MCF 10A (cell line): ENCODE measurements at regions of chr1 and their contacts with region 1.

Region 1: DNA sequence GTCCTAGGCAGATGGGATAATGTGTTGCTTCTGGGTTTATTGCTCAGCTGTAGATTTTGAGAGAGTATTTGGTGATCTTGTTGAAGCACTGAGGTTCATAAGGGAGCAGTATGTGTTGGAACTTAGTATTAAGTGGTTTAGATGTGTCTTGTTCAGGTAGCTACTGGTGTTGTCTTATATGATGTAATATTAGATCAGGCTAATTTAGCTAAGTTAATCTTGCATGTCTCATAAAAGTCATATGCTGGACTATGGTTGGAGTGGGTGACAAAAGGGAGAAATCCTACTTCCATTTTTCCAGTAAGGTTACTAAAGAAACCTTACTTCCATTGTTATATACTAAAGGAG is 196.4 kb downstream of the CLEC20A start:
- DNase-seq: no peak
- H3K4me3 Mint-ChIP-seq: no peak overlapping the region
- H3K27ac Mint-ChIP-seq: peak overlapping the region; percentile 50
- H3K4me1 Mint-ChIP-seq: peaks cover 15% of the 10 kb centered on the region
- H3K27me3 Mint-ChIP-seq: no peaks in the 10 kb centered on the region
- CTCF ChIP-seq: no peak

Region 2: DNA sequence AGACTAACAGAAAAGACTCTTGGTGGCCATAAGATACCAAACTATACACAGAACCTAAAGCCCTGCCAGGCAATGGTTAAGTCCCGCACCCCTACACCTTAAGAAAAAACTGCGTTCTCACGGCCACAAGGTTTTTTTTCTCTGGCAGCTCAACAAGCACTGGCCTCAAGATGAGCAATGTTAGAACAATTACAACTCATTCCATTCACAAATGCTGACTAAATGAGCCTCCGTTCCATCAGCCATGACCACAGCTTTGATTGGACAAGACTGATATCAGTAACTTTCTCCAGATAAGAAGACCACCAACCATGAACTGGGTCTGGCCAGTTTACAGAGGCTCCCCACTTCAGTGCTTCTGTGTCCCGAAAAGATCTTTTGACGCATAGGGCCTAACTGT is 362.4 kb before region 1 on chr1:
- CTCF ChIA-PET with region 1: no interaction called
- POLR2A ChIA-PET with region 1: no interaction called
- intact Hi-C with region 1: no loop called
- DNase-seq: no peak
- H3K4me3 Mint-ChIP-seq: no peak overlapping the region
- H3K27ac Mint-ChIP-seq: no peak overlapping the region
- H3K4me1 Mint-ChIP-seq: peaks cover 5% of the 10 kb centered on the region
- H3K27me3 Mint-ChIP-seq: no peaks in the 10 kb centered on the region
- CTCF ChIP-seq: no peak

Region 3: DNA sequence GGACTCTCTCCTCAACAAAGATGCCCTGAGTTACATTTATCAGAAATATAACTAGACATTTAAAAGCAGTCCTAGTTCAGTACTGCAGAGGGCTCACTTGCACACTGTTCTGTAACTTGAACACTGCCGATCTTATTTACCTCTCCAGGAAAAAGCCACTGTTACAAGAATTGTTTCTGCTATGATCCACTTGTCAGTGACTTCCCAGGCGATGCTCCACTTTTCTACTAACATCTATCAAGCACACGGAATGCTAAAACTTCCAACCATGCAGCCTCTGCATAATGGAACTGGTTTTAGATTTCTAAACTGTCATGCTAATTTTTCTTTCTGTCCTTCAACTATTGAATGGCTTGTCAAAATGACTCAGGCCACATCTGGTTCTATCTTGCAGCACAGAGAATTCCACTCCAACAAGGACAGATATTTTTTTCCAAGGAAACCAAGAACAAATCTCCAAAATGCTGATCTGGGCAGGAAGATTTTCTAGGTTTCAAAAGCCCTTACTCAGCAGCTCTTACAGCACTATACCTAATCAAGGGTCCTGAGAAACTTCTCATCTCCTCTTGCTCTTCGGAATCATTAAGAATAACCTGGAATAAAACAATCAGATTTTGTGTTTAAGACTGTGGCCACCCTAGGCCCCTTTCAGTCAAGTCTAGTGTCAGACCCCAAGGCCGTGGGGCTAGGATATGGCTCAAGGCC is 340.4 kb before region 1 on chr1:
- CTCF ChIA-PET with region 1: interaction called, 18 read pairs
- POLR2A ChIA-PET with region 1: no interaction called
- intact Hi-C with region 1: loop called (anchors 2 kb)
- DNase-seq: peak; percentile 50
- H3K4me3 Mint-ChIP-seq: no peak overlapping the region
- H3K27ac Mint-ChIP-seq: no peak overlapping the region
- H3K4me1 Mint-ChIP-seq: peaks cover 6% of the 10 kb centered on the region
- H3K27me3 Mint-ChIP-seq: no peaks in the 10 kb centered on the region
- CTCF ChIP-seq: peak; percentile 74

Region 4: DNA sequence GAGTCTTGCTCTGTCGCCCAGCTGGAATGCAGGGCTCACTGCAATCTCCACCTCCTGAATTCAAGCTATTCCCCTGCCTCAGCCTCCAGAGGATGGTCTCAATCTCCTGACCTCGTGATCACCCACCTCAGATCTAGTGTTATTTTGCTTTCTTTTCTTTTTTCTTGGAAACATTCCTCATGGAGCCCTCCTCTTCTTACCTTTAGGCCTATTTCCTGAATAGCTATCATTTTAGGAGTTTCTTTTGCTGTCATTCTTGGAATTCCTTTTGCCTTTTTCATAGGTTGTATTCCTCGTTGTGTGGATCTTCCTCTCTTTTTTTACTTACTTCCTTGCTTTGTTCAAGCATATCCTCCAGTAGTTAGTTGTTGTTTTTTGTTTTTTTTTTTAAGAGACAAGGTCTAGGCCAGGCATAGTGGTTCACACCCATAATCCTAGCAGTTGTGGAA is 32.7 kb before region 1 on chr1:
- CTCF ChIA-PET with region 1: interaction called, 14 read pairs
- POLR2A ChIA-PET with region 1: no interaction called
- intact Hi-C with region 1: no loop called
- DNase-seq: no peak
- H3K4me3 Mint-ChIP-seq: peak overlapping the region; percentile 26
- H3K27ac Mint-ChIP-seq: peak overlapping the region; percentile 87
- H3K4me1 Mint-ChIP-seq: peaks cover 37% of the 10 kb centered on the region
- H3K27me3 Mint-ChIP-seq: no peaks in the 10 kb centered on the region
- CTCF ChIP-seq: no peak

Region 5: DNA sequence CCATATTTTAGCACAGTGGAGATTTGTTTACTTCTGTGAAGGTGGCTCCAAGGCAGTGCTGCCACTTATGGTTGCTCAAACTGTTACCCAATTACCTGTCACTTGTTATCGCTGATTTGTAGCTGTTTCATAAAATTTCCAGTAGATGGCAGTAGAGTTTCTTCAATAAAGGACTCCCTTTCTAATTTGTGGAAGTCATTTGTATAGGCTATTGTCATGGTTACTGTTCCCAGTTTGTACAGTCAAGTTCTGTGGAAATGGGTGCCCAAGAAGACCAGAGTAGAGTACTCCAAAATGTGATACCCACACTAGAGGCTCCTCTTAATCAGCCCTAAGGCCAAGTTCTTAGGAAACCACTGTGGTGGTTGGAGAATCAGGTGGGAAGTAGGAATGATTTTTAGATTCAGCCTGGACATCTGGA is 10.4 kb after region 1 on chr1:
- CTCF ChIA-PET with region 1: interaction called, 76 read pairs
- POLR2A ChIA-PET with region 1: interaction called, 8 read pairs
- intact Hi-C with region 1: no loop called
- DNase-seq: peak; percentile 84
- H3K4me3 Mint-ChIP-seq: no peak overlapping the region
- H3K27ac Mint-ChIP-seq: peak overlapping the region; percentile 77
- H3K4me1 Mint-ChIP-seq: peaks cover 15% of the 10 kb centered on the region
- H3K27me3 Mint-ChIP-seq: no peaks in the 10 kb centered on the region
- CTCF ChIP-seq: peak; percentile 82

Region 6: GRCh38 chr1:178344513-178345082 is 44.3 kb after region 1 on chr1:
- CTCF ChIA-PET with region 1: interaction called, 29 read pairs
- POLR2A ChIA-PET with region 1: interaction called, 8 read pairs
- intact Hi-C with region 1: no loop called
- DNase-seq: peak; percentile 94
- H3K4me3 Mint-ChIP-seq: peak overlapping the region; percentile 46
- H3K27ac Mint-ChIP-seq: peak overlapping the region; percentile 90
- H3K4me1 Mint-ChIP-seq: peaks cover 42% of the 10 kb centered on the region
- H3K27me3 Mint-ChIP-seq: no peaks in the 10 kb centered on the region
- CTCF ChIP-seq: peak; percentile 75

Region 7: GRCh38 chr1:178438432-178438831 is 138.1 kb after region 1 on chr1:
- CTCF ChIA-PET with region 1: interaction called, 10 read pairs
- POLR2A ChIA-PET with region 1: interaction called, 4 read pairs
- intact Hi-C with region 1: no loop called
- DNase-seq: no peak
- H3K4me3 Mint-ChIP-seq: no peak overlapping the region
- H3K27ac Mint-ChIP-seq: no peak overlapping the region
- H3K4me1 Mint-ChIP-seq: peaks cover 6% of the 10 kb centered on the region
- H3K27me3 Mint-ChIP-seq: no peaks in the 10 kb centered on the region
- CTCF ChIP-seq: no peak

Region 8: DNA sequence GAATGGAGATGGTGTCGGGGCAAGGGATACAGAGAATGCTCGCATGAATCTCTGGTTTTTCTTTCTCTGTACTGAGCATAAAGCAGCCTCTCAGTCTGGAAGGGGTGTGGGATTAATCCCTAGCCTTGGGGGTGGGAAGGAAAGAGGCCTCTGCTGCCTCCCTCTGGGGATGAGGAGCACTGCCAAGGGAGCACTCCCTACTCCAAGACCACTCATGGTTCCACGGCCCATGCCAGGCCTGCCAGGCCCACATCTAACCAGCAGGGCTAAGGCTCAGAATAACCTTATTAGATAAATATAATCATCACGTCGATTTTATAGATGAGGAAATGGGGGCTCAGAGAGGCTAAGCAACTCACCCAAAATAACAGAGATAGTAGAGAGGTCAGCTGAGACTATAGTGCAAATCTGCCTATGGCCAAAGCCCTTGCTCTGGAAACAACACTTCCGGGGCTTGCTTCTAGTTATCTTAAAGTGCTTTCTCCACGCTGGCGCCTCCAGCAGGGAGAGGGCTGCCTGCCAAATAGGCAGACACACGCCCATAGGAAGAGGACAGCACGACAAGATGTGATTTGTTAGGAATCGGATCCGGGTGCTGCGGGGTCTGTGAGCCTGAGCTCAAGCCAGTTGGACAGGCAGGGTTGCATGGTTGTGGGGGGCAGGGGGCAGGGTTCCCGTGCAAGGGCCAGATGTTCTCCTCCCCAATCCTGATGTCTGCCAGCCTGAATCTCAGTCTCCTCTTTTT is 213.1 kb after region 1 on chr1:
- CTCF ChIA-PET with region 1: interaction called, 224 read pairs
- POLR2A ChIA-PET with region 1: no interaction called
- intact Hi-C with region 1: no loop called
- DNase-seq: no peak
- H3K4me3 Mint-ChIP-seq: no peak overlapping the region
- H3K27ac Mint-ChIP-seq: no peak overlapping the region
- H3K4me1 Mint-ChIP-seq: no peaks in the 10 kb centered on the region
- H3K27me3 Mint-ChIP-seq: no peaks in the 10 kb centered on the region
- CTCF ChIP-seq: no peak